ENCODE measurements at regions of chr4 and their contacts with region 1.

Region 1: DNA sequence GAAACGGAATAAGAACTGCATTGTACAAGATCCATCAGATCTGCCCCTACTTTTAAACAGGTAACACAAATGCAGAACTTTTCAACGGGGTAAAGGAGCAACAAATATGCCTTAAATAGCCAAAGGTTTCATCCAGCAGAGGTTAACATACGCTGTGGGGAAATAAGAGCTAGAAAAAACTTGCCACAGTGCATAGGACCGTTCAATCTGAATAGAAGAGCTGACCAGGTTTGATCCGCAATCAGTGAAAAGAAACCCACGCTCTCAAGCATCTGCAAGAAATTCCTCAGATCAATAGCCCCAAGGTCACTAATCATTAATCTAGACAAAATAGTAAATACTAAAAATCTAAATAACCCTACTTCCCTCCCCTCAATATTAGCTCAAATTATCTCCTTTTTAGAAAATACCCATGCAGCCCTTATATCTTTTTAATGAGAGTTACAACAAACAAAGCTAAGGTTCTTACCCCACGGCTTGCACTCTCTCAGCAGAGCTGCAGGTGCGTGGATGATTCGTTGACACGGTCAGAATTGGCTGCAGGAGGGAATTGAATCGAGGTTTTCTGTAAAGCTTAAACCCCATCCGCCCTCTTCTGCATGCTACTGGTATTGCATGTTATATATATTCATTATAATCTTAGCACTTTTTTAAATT is at the start of gene TLR10:
- DNase-seq: peak; percentile 51
- H3K27ac ChIP-seq: no peak within 1 kb of the TSS
- CTCF ChIP-seq: peak; percentile 84

Region 2: DNA sequence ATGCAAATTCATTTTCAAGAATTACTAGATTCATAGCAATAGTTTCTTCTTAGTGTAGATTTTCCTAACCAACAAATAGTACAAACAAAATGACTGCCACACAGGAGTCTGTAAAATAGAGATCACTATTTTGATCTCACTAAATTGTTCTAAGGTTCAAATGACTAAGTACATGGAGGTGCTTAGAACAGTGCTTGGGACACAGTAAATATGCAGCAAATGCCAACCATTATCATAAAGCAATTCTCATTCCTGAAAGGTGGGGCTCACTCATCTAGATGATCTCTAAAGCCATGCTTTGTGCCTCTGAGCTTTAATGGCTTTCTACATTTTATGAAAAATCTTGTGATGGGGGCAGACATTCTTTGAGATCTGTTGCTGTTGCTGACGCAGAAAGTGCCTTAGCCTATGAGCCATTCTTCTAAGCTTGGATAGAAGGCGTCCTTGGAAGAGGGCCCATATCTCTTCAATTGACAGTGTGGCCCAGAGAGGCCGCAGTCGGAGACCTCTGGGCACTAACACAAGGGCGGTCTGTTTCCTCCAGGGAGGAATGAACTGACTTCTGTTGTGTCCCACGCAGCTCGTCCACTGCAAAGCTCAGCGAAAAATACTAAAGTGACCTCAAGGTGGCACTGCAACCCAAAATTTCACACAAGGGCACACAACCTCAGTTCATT is 23.3 kb before region 1 on chr4:
- CTCF ChIA-PET with region 1: interaction called, 20 read pairs
- POLR2A ChIA-PET with region 1: no interaction called
- DNase-seq: peak; percentile 42
- H3K27ac ChIP-seq: no peak overlapping the region
- CTCF ChIP-seq: peak; percentile 68

Region 3: GRCh38 chr4:38980903-38981676 is 198.5 kb after region 1 on chr4:
- CTCF ChIA-PET with region 1: no interaction called
- POLR2A ChIA-PET with region 1: no interaction called
- DNase-seq: no peak
- H3K27ac ChIP-seq: no peak overlapping the region
- CTCF ChIP-seq: no peak

Region 4: GRCh38 chr4:39480902-39481695 is 698.5 kb after region 1 on chr4:
- CTCF ChIA-PET with region 1: no interaction called
- POLR2A ChIA-PET with region 1: no interaction called
- DNase-seq: no peak
- H3K27ac ChIP-seq: no peak overlapping the region
- CTCF ChIP-seq: no peak